HepG2 (cell line): ENCODE measurements at regions of chr6 and their contacts with region 1.

Region 1: GRCh38 chr6:106608062-106608668 is 21.1 kb downstream of the RTN4IP1 start:
- DNase-seq: peak; percentile 79
- ATAC-seq: peak; percentile 83
- H3K4me3 ChIP-seq: no peak overlapping the region
- H3K27ac ChIP-seq: no peak overlapping the region
- H3K4me1 ChIP-seq: no peaks in the 10 kb centered on the region
- H3K27me3 ChIP-seq: no peaks in the 10 kb centered on the region
- CTCF ChIP-seq: peak; percentile 76
- EP300 ChIP-seq: no peak
- POLR2A ChIP-seq: no peak
- RAD21 ChIP-seq: peak; percentile 47; the same call in 1 of the 2 replicates

Region 2: GRCh38 chr6:106648651-106649308 is 40.6 kb after region 1 on chr6:
- CTCF ChIA-PET with region 1: no interaction called
- POLR2A ChIA-PET with region 1: no interaction called
- in situ Hi-C with region 1: no loop called
- intact Hi-C with region 1: loop called (anchors 5 kb)
- DNase-seq: no peak
- ATAC-seq: no peak
- H3K4me3 ChIP-seq: no peak overlapping the region
- H3K27ac ChIP-seq: no peak overlapping the region
- H3K4me1 ChIP-seq: no peaks in the 10 kb centered on the region
- H3K27me3 ChIP-seq: no peaks in the 10 kb centered on the region
- CTCF ChIP-seq: no peak
- EP300 ChIP-seq: no peak
- POLR2A ChIP-seq: no peak
- RAD21 ChIP-seq: no peak

Region 3: GRCh38 chr6:106688186-106688951 is 80.2 kb after region 1 on chr6:
- CTCF ChIA-PET with region 1: interaction called, 3 read pairs
- POLR2A ChIA-PET with region 1: no interaction called
- in situ Hi-C with region 1: no loop called
- intact Hi-C with region 1: loop called (anchors 1 kb)
- DNase-seq: peak; percentile 63
- ATAC-seq: peak; percentile 78
- H3K4me3 ChIP-seq: peak overlapping the region in 2 of 3 experiments; percentile 34 to 55; a peak in 3 of 6 replicates
- H3K27ac ChIP-seq: peak overlapping the region; percentile 46
- H3K4me1 ChIP-seq: peaks cover 15% of the 10 kb centered on the region
- H3K27me3 ChIP-seq: no peaks in the 10 kb centered on the region
- CTCF ChIP-seq: peak; percentile 50
- EP300 ChIP-seq: no peak
- POLR2A ChIP-seq: no peak
- RAD21 ChIP-seq: 0 out of 2 replicates have a peak, but pooled peaks have one; percentile 13